Endothelial cell of umbilical vein (primary cell): ENCODE measurements at regions of chr6 and their contacts with region 1.

Region 1: GRCh38 chr6:162814426-162814973 is 86.7 kb downstream of the PACRG start:
- DNase-seq: no peak
- H3K4me3 ChIP-seq: no peak overlapping the region
- H3K27ac ChIP-seq: no peak overlapping the region
- H3K4me1 ChIP-seq: no peaks in the 10 kb centered on the region
- H3K27me3 ChIP-seq: no peaks in the 10 kb centered on the region
- CTCF ChIP-seq: no peak
- POLR2A ChIP-seq: no peak

Region 2: GRCh38 chr6:162798546-162799266 is 15.8 kb before region 1 on chr6:
- CTCF ChIA-PET with region 1: no interaction called
- POLR2A ChIA-PET with region 1: no interaction called
- dilution Hi-C with region 1: no loop called
- intact Hi-C with region 1: loop called (anchors 1 kb)
- DNase-seq: no peak
- H3K4me3 ChIP-seq: no peak overlapping the region
- H3K27ac ChIP-seq: no peak overlapping the region
- H3K4me1 ChIP-seq: no peaks in the 10 kb centered on the region
- H3K27me3 ChIP-seq: no peaks in the 10 kb centered on the region
- CTCF ChIP-seq: no peak
- POLR2A ChIP-seq: no peak